PC-9 (cell line): ENCODE measurements at regions of chr2 and their contacts with region 1.

Region 1: DNA sequence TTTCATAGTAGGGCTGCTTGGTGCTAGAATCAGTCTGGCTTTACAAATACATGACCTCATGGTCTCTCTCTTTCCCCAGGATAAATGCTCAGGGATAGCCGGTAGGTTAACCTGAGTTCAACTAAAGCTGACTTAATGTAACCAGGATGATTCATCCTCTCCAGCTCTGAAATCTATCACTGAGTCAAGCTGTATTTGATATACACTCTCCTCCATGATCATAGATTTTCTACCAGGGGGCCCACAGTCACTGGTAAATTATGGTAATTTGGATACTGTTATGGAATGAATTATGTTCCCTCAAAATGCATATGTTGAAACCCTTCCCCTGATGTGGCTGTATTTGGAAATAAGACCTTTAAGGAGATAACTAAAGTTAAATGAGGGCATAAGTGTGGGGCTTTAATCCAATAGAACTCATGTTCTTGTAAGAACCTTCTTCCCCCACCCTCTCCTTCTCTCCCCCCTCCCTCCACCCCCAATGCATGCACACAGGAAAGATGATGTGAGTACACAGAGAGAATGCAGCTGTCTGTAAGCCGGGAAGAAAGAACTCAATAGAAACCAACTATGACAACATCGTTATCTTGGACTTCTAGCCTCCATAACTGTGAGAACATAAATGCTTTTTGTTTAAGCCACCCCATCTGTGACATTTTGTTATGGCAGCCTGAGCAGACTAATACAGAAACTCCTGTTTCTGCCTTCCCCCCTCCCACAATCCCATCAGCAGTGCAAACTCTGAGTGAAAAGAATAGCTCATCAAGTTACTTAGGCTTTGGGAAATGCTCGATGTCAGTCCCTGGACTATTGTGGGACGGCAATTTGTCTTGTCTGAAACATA is 134.9 kb upstream of the KYNU start:
- DNase-seq: peak in 1 of 2 experiments; percentile 35
- H3K4me3 ChIP-seq: no peak overlapping the region
- H3K27ac ChIP-seq: peak overlapping the region; percentile 50
- H3K4me1 ChIP-seq: peaks cover 10% of the 10 kb centered on the region; the same call in 1 of the 2 replicates
- H3K27me3 ChIP-seq: no peaks in the 10 kb centered on the region
- CTCF ChIP-seq: no peak

Region 2: DNA sequence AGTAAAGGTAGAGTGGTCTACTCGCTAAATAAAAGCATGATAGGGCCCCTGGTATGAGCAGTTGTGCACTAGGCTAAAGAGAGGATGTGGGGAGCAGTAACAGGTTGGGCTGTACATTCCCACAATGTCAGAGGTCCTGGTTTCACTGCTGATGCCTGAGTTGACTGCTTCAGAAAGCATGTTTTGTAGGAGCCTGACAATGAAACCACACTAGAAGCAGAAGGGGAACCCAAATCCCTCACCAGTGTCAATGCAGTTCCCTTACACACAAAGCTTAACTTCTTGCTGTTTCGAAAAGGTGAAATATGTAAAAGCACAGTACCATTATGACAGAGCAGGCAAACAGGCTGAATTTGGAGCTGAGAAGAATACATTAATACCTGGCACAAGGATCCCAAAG is 156.8 kb before region 1 on chr2:
- CTCF ChIA-PET with region 1: no interaction called
- POLR2A ChIA-PET with region 1: no interaction called
- intact Hi-C with region 1: no loop called
- DNase-seq: no peak
- H3K4me3 ChIP-seq: no peak overlapping the region
- H3K27ac ChIP-seq: no peak overlapping the region
- H3K4me1 ChIP-seq: no peaks in the 10 kb centered on the region
- H3K27me3 ChIP-seq: no peaks in the 10 kb centered on the region
- CTCF ChIP-seq: no peak

Region 3: DNA sequence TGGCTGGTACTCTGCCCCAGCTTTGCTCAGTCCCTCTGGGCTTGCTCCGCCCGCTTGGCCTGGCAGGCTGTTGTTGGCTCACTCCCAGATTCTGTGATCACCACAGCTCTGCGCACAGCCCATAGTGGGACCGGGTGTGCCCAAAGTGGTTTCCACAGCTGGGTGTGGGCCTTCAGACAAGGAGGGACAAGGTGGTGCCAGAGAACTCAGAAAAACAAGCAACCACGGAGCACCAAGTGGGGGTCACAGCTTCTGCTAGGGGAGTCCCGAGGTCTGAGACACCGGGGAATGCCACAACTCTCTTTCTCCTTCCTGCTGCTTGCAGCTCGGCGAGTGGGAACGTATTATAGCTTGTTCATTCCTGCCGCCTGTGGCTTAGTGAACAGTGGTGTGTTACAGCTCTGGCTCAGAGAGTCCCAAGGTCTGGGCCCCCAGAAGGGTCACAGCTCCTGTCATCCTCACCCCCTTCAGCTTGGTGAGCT is 125.7 kb after region 1 on chr2:
- CTCF ChIA-PET with region 1: no interaction called
- POLR2A ChIA-PET with region 1: no interaction called
- intact Hi-C with region 1: no loop called
- DNase-seq: peak in 1 of 2 experiments; percentile 71
- H3K4me3 ChIP-seq: no peak overlapping the region
- H3K27ac ChIP-seq: peak overlapping the region; percentile 59; the same call in 1 of the 2 replicates
- H3K4me1 ChIP-seq: peaks cover 40% of the 10 kb centered on the region
- H3K27me3 ChIP-seq: no peaks in the 10 kb centered on the region
- CTCF ChIP-seq: no peak

Region 4: DNA sequence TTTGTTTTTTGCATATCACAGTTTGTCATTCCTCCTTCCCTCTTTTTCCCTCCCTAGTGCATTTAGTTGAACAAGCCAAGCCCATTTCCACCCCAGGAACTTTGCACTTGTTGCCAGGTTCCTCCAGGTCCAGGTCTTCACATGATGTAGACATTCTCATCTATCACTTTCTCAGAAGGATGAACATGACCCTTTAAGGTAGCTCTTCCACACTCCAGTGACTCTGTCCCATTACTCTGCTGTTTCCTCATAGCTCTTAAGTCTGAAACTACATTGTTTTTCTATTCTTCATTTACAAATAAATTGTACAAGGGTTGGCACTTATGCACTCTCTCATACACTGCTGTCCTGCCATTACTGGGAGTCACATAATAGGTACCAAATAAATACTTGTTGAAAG is 140.9 kb after region 1 on chr2:
- CTCF ChIA-PET with region 1: interaction called, 11 read pairs
- POLR2A ChIA-PET with region 1: no interaction called
- intact Hi-C with region 1: no loop called
- DNase-seq: no peak
- H3K4me3 ChIP-seq: no peak overlapping the region
- H3K27ac ChIP-seq: no peak overlapping the region
- H3K4me1 ChIP-seq: 0 out of 2 replicates have a peak, but pooled peaks cover 3% of the 10 kb centered on the region
- H3K27me3 ChIP-seq: no peaks in the 10 kb centered on the region
- CTCF ChIP-seq: no peak

Region 5: DNA sequence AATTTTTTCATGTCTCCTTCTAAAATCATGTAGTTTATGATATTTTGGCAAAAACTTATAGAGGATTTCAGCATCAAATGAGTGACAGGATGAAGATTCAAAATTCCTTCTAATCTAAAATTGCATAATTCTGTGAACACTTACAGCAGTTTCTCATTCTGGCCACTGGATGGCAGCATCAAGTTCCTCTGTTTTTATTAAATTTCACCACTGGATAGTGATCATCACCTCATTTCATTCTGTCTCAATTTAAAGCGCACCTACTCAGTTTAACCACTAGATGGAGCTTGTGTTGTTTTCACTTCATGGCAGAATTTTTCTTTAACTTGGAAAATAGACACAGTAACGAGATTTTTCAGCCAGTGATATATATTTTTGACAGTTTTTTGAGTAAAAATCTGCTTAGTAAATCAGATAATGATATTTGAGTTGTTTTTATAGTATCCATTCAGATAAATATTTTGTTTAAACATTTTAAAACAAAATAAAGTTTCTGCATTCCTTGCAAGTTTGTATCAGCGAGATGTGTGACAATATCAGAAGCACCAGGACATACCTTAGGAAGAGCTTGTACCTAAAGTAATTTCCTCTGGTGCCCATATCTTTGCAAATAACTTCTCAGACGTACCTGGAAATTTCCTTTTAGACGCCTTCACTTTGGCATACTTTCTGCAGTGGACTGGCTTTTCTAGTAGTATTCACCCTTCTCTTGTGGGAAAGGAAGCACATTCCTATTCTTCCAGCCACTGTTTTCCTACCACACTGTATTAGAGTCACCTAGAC is 291.9 kb after region 1 on chr2:
- CTCF ChIA-PET with region 1: no interaction called
- POLR2A ChIA-PET with region 1: no interaction called
- intact Hi-C with region 1: no loop called
- DNase-seq: peak; percentile 50 to 70
- H3K4me3 ChIP-seq: no peak overlapping the region
- H3K27ac ChIP-seq: no peak overlapping the region
- H3K4me1 ChIP-seq: no peaks in the 10 kb centered on the region
- H3K27me3 ChIP-seq: no peaks in the 10 kb centered on the region
- CTCF ChIP-seq: peak; percentile 94